Gastrocnemius medialis (tissue), 4 donors: ENCODE measurements at regions of chr7 and their contacts with region 1.

Region 1: GRCh38 chr7:25851332-25852210 is 300.4 kb upstream of the NFE2L3 start:
- DNase-seq: peak; percentile 81 to 86
- ATAC-seq: peak; percentile 33 to 42
- H3K4me3 ChIP-seq: peak overlapping the region in 1 of 4 donors; percentile 27
- H3K27ac ChIP-seq: peak overlapping the region; percentile 47 to 90 (median 88)
- H3K4me1 ChIP-seq: peaks cover 55 to 62% of the 10 kb centered on the region in 2 donors
- H3K27me3 ChIP-seq: no peaks in the 10 kb centered on the region
- CTCF ChIP-seq: peak; percentile 86 to 93 (median 91)
- POLR2A ChIP-seq: no peak

Region 2: DNA sequence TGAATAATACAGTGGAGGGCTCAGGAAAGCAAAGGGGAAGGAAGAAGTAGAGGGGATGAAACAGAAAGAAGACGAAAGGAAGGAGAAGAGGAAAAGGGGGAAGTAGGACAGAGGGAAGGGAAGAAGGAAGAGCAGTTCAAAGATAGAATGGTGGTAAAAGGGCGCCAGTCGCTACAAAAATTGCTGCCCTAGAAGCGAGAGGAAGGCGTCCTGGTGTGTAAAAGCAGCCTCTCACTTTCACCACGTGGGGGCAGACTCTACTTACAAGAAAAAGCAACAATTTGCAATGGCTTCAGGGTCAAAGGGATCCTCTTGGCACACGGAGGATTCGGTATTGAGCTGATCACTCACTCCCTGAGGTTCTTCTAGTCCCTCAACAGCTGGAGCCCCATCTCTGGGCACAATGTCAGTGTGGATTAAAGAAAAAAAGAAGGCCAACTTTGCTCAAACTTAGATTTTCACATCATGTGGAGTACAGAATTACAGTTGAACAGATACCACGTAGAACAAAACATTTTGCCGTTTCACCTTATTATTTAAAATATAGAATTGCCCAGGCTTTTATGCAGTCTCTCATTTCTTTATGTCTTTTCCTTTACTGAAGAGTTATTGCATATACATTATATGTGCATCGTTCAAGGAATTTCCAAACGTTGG is 591.9 kb before region 1 on chr7:
- in situ Hi-C with region 1: loop called (anchors 5 to 10 kb)
- intact Hi-C with region 1: loop called (anchors 1 kb)
- DNase-seq: peak; percentile 20 to 55
- ATAC-seq: peak; percentile 69 to 94
- H3K4me3 ChIP-seq: no peak overlapping the region
- H3K27ac ChIP-seq: no peak overlapping the region
- H3K4me1 ChIP-seq: peaks cover 0 to 7% of the 10 kb centered on the region in 2 donors
- H3K27me3 ChIP-seq: no peaks in the 10 kb centered on the region
- CTCF ChIP-seq: peak; percentile 49 to 77 (median 74)
- POLR2A ChIP-seq: no peak

Region 3: DNA sequence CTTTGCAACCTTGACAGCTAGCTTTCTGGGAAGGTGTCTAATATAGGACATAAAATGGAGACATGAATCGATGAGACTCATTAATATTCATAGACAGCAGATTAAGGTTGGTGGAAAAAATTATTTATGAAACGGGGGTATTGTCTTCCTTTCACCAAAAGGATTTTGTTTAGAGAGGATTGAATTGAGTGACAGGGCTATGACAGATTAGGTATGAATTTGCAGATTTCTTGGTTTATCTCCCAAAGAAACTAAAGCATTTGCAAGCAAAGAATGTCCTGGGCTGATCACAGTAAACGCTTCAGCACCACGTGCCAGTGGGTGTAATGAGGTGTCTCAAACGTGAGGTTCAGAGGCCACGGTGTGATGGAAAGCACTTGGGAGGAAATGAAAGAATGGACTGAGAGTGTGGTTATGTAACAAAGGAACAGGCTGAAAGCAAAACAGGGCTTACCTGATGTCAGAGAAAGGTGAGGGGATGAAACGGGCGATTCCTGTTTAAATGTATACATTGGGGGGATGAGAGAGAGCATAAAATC is 294.1 kb before region 1 on chr7:
- in situ Hi-C with region 1: loop called in 1 of 4 experiments (anchors 5 kb)
- intact Hi-C with region 1: no loop called
- DNase-seq: no peak
- ATAC-seq: no peak
- H3K4me3 ChIP-seq: no peak overlapping the region
- H3K27ac ChIP-seq: no peak overlapping the region
- H3K4me1 ChIP-seq: peaks cover 0 to 6% of the 10 kb centered on the region in 2 donors
- H3K27me3 ChIP-seq: peaks cover 0 to 2% (median 0%) of the 10 kb centered on the region in 3 donors
- CTCF ChIP-seq: no peak
- POLR2A ChIP-seq: no peak

Region 4: DNA sequence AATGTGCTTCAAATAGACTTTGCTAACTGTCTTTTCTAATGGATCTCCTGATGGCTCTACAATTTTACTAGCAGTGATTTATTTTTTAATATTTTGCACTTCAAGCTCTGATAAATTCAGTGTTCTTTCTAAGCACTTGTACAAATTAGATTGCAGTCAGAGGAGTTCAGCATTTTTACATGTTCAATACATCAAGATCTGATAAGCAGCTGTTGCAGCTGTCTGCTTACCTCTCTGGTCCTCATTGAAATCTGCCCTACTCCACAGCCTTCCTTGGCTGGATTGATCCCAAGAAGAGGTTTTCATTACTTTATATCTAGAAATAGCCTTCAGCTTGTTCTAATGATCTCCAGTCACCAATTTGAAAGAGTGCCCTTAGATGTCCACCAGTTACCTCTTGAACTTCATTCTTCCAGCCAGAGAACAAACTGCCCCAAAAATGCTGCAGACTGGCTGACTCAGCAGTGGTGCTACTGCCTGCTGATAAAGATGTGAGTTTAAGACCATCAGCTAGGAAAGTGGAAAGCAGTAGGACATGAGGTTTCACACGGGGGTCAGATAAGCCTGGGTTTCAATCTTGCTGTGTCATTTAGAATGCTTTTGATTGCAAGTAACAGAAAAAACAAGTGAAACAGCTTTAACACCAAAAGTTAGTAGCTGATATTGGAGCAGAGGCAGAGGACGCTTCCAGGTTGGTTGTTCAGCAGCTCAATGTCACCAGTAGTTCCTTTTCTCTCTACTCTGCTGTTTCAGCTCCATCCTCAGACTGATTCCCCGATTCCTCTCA is 272.4 kb before region 1 on chr7:
- in situ Hi-C with region 1: loop called in 2 of 4 experiments (anchors 10 kb)
- intact Hi-C with region 1: no loop called
- DNase-seq: no peak
- ATAC-seq: no peak
- H3K4me3 ChIP-seq: no peak overlapping the region
- H3K27ac ChIP-seq: no peak overlapping the region
- H3K4me1 ChIP-seq: no peaks in the 10 kb centered on the region
- H3K27me3 ChIP-seq: no peaks in the 10 kb centered on the region
- CTCF ChIP-seq: no peak
- POLR2A ChIP-seq: no peak

Region 5: GRCh38 chr7:25720427-25720826 is 131.1 kb before region 1 on chr7:
- in situ Hi-C with region 1: loop called in 1 of 4 experiments (anchors 25 kb)
- intact Hi-C with region 1: loop called (anchors 1 kb)
- DNase-seq: no peak
- ATAC-seq: peak in 1 of 2 donors; percentile 45
- H3K4me3 ChIP-seq: no peak overlapping the region
- H3K27ac ChIP-seq: no peak overlapping the region
- H3K4me1 ChIP-seq: peaks cover 3 to 9% of the 10 kb centered on the region in 2 donors
- H3K27me3 ChIP-seq: no peaks in the 10 kb centered on the region
- CTCF ChIP-seq: peak in 4 of 5 experiments; percentile 19 to 36 (median 30)
- POLR2A ChIP-seq: no peak

Region 6: DNA sequence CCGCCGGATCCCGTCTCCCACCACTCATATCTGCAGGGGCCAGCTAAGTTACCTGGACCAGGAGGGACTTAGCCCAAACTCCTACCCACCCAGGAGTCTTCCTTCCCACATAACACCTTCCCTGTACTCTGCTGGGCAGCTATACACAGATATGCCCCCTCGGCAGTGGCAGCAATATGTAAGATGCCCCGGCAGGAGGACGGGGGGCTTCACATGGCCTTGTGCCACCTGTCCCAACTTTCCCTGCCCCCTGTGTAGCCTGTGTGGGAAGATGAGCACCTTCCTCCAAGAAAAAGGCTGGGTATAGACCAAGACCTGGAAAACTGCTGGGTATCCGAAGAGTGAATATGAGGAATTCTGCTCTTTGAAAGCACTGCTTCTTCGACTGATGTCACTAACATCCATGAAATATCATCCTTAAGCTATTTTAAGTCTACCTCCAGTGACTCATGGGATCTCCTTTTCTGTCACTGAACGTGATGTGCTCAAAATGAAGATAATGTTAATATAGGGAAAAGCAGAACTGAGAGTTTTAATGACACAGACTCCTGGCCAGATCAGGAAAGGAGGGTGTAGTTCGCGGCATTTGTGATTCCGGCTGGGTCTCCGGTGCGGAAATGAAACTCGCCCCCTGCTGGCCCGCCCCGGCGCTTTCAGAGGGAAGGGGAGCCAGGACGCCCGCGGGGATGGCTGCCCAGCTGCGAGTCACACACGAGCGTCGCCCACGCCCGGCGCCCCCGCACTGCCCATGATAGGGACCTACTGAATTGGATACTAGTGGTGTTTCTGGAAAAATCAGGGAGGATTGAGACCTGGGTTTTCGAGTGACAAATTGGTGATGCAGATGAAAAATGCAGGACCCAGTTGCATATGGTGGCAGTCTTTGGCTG is 43.6 kb after region 1 on chr7:
- in situ Hi-C with region 1: no loop called
- intact Hi-C with region 1: no loop called
- DNase-seq: peak; percentile 21 to 61
- ATAC-seq: peak; percentile 67 to 73
- H3K4me3 ChIP-seq: peak overlapping the region; percentile 38 to 62 (median 47)
- H3K27ac ChIP-seq: peak overlapping the region; percentile 26 to 61 (median 54)
- H3K4me1 ChIP-seq: peaks cover 7 to 9% of the 10 kb centered on the region in 2 donors
- H3K27me3 ChIP-seq: no peaks in the 10 kb centered on the region
- CTCF ChIP-seq: peak; percentile 50 to 84 (median 72)
- POLR2A ChIP-seq: no peak

Region 7: DNA sequence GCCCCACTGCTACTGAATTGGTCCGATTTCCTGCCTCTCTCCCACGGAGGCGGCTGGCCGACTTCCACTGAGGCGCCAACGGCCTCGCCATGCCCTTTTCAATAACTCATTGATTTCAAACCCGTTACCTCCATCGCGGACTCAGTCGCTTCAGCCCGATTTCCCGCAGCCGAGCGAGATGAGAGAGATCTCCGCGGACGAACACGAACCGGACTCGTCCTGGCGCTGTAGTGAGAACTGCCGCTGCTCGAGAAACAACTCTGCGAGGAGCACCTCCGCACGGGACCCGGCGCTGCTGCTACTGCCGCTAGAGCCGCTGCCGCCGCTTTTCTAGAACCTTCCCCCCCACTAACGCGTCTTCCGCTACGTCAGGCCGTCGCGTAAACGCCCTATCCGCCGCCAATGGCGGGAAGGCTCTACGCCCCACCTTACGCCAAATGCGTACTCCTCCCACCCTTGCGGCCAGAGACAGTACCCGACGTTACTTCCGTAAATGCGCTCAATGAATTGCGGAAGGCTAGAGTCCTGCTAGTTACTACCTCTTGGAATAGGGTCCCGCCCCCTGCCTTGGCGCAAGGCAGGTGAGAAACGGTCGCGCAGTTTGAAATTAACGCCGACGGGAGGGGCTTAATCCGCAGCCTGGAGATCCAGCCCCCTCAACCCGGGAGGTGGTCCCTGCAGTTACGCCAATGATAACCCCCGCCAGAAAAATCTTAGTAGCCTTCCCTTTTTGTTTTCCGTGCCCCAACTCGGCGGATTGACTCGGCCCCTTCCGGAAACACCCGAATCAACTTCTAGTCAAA is 349.1 kb after region 1 on chr7 and contains the start of gene HNRNPA2B1:
- in situ Hi-C with region 1: loop called in 2 of 4 experiments (anchors 10 to 25 kb)
- intact Hi-C with region 1: loop called (anchors 2 kb)
- DNase-seq: peak; percentile 95
- ATAC-seq: peak; percentile 82 to 86
- H3K4me3 ChIP-seq: peak within 1 kb of the TSS; percentile 79 to 98 (median 94)
- H3K27ac ChIP-seq: peak within 1 kb of the TSS; percentile 97 to 100 (median 98)
- H3K4me1 ChIP-seq: peaks cover 39 to 50% of the 10 kb centered on the region in 2 donors
- H3K27me3 ChIP-seq: no peaks in the 10 kb centered on the region
- CTCF ChIP-seq: peak in 1 of 5 experiments; percentile 15
- POLR2A ChIP-seq: peak; percentile 100
- total RNA-seq, gene HNRNPA2B1: 155 to 242 (median 166) TPM

Region 8: GRCh38 chr7:27179503-27180430 is 1328.2 kb after region 1 on chr7:
- in situ Hi-C with region 1: loop called in 2 of 4 experiments (anchors 10 kb)
- intact Hi-C with region 1: no loop called
- DNase-seq: peak; percentile 65 to 79
- ATAC-seq: peak; percentile 40 to 53
- H3K4me3 ChIP-seq: peak overlapping the region; percentile 47 to 56 (median 52)
- H3K27ac ChIP-seq: peak overlapping the region; percentile 90 to 99 (median 95)
- H3K4me1 ChIP-seq: peaks cover 43 to 61% of the 10 kb centered on the region in 2 donors
- H3K27me3 ChIP-seq: peaks cover 0 to 8% (median 3%) of the 10 kb centered on the region in 3 donors
- CTCF ChIP-seq: peak; percentile 91 to 96 (median 95)
- POLR2A ChIP-seq: peak; percentile 79 to 90